ENCODE measurements at regions of chr7 and their contacts with region 1.

Region 1: DNA sequence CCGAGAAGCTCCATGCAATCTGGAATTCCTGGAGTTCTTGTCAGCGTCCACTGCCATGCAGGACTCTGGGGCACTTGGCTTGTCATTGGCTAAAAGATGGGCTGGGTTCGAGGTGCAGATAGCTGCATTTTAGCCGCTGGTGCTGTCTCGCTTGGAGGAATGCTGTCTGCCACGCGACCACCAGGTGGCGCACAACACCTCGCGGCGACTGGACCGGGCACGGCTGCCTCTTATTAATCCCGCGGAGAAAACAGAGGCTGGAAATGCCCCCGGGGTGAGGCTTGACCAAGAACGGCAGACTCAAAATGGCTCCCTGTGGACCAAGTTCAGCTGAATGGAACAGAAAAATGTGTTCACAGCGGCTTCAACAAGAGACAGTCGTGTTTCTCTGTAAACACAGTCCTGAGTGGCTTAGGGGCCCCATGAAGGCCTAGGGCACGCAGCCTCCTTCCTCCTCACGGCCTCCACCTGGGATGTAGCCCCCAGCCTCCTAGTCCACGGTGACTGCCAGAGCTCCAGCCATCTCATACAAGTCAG is 46.2 kb downstream of the AOC1 start:
- DNase-seq: peak; percentile 54 to 96 (median 80)
- ATAC-seq: peak; percentile 93
- H3K4me3 ChIP-seq: no peak overlapping the region
- H3K27ac ChIP-seq: no peak overlapping the region
- H3K4me1 ChIP-seq: peaks cover 0 to 7% of the 10 kb centered on the region in 2 donors
- H3K27me3 ChIP-seq: peaks cover 8 to 58% of the 10 kb centered on the region in 2 donors
- CTCF ChIP-seq: peak; percentile 95 to 96

Region 2: DNA sequence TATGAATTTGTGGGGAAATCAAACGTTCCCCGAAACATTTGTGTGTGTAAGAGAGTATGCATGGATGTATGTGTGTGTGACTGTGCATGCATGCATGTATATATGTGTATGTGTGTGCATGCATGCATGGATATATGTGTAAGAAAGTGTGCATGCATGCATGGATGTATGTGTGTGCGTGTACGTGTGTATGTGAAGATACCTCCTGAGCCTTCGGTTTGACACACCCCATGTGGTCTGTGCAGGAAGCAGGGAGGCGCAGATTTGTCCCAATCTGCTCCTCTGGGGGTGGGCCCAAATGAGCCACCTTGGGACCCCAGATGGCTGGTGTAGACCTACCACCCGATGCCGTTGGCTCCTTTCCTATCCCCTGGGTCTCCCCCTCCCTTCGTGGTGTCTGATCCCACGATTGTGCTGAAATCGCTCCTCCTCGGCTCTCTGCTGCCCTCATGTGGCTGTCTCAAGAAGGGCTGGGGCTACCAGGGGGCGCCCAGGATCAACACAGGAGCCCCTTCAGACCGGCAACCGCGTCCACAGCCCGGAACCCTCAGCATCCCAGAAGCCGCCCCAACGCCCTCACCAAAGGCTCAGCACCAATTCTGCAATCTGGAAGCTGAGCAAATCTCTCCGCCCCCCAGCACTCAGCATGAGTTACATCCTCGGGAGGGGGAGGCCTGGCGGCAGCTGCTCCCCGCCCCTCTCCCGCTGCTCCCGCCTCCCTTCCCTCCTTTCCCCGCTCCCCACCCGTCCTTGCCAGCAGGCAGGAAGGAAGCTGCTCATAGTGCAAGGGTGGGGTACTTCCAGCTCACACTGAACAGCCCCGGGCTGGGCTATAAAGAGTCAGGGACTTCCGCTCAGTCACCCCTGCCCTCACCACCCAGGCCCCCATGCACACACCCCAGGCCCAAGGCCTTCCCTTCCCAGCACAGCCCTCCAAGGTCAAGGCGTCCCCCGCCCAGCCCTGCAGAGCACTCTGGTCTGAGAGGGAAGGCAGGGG is 90.0 kb after region 1 on chr7:
- intact Hi-C with region 1: loop called in 1 of 2 experiments (anchors 5 kb)
- DNase-seq: peak in 2 of 4 donors; percentile 75 to 79
- ATAC-seq: peak; percentile 64
- H3K4me3 ChIP-seq: no peak overlapping the region
- H3K27ac ChIP-seq: peak overlapping the region in 1 of 2 donors; percentile 55
- H3K4me1 ChIP-seq: peaks cover 3 to 27% of the 10 kb centered on the region in 2 donors
- H3K27me3 ChIP-seq: peaks cover 7 to 47% of the 10 kb centered on the region in 2 donors
- CTCF ChIP-seq: peak; percentile 80 to 82

Region 3: GRCh38 chr7:151100921-151101320 is 202.4 kb after region 1 on chr7:
- intact Hi-C with region 1: no loop called
- DNase-seq: peak in 1 of 4 donors; percentile 63
- ATAC-seq: no peak
- H3K4me3 ChIP-seq: no peak overlapping the region
- H3K27ac ChIP-seq: no peak overlapping the region
- H3K4me1 ChIP-seq: peaks cover 0 to 10% of the 10 kb centered on the region in 2 donors
- H3K27me3 ChIP-seq: no peaks in the 10 kb centered on the region
- CTCF ChIP-seq: no peak

Region 4: DNA sequence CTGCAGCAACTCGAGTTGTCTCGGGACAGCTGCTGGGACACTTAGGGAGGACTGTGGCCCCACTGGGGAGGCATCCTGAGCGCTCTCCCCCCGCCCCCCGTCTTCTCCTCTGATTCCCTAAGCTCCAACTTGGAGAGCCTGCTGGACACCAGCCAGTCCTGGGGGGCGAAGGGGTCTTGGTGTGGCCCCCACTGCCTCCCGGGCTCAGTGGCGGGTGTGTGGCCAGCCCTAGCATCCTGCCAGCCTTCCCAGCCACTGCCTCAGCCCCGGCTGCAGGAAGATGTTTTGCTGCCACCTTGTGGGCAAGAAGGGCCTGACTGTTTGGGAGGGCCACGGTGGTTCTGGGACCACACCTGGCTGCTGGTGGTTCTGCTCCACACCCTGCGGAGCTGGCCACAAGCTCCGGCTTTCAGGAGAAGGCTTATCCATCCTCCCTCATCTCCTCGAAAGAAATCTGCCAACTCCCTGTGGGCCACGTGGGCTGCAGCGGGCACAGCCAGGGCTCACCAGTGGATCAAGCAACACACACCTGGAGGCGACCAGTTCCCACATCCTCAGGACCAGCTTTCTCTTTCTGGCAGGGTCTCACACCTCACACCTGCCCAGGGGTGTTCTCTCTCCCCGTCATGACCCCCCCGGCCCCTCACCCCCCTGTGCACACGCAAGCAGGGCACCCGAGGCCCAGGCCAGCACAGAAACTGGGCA is 212.6 kb after region 1 on chr7:
- intact Hi-C with region 1: loop called in 1 of 2 experiments (anchors 10 kb)
- DNase-seq: peak in 3 of 4 donors; percentile 78 to 91 (median 81)
- ATAC-seq: peak; percentile 62
- H3K4me3 ChIP-seq: no peak overlapping the region
- H3K27ac ChIP-seq: no peak overlapping the region
- H3K4me1 ChIP-seq: peaks cover 0 to 50% of the 10 kb centered on the region in 2 donors
- H3K27me3 ChIP-seq: peaks cover 0 to 5% of the 10 kb centered on the region in 2 donors
- CTCF ChIP-seq: peak; percentile 87 to 94

Measured in left lung (tissue), 14 donors.